Ovary (tissue), 10 donors: ENCODE measurements at regions of chr2 and their contacts with region 1.

Region 1: GRCh38 chr2:96407041-96407918 is 71.7 kb downstream of the NCAPH start:
- DNase-seq: peak; percentile 24 to 60 (median 45)
- H3K4me3 ChIP-seq: no peak overlapping the region
- H3K27ac ChIP-seq: no peak overlapping the region
- H3K4me1 ChIP-seq: peaks cover 13% of the 10 kb centered on the region
- H3K27me3 ChIP-seq: no peaks in the 10 kb centered on the region
- CTCF ChIP-seq: peak; percentile 35 to 54 (median 51)
- EP300 ChIP-seq: no peak
- POLR2A ChIP-seq: no peak

Region 2: GRCh38 chr2:96438589-96438988 is 31.3 kb after region 1 on chr2:
- intact Hi-C with region 1: no loop called
- DNase-seq: no peak
- H3K4me3 ChIP-seq: no peak overlapping the region
- H3K27ac ChIP-seq: no peak overlapping the region
- H3K4me1 ChIP-seq: no peaks in the 10 kb centered on the region
- H3K27me3 ChIP-seq: no peaks in the 10 kb centered on the region
- CTCF ChIP-seq: no peak
- EP300 ChIP-seq: no peak
- POLR2A ChIP-seq: no peak

Region 3: DNA sequence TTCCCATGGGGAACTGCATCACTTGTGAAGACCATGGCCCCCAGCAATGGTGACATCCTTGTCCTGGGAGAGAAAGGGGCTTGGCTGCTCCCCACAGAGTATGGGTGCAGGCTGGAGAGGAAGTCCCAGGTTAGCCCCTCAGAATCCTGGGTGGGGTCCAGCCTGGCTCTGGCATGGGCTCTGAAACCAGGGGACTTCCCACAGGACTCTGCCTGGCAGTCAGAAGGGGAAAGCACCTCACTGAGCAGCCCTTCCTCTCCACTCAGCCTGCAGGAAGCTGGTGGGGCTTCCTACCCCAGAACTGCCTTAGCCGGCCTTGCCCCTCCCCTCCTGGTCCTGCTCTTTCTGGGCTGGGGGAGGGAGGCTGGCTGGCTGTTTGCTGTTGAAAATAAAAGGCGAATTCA is 94.2 kb after region 1 on chr2:
- intact Hi-C with region 1: loop called in 3 of 4 experiments (anchors 5 kb)
- DNase-seq: no peak
- H3K4me3 ChIP-seq: no peak overlapping the region
- H3K27ac ChIP-seq: no peak overlapping the region
- H3K4me1 ChIP-seq: peaks cover 4% of the 10 kb centered on the region
- H3K27me3 ChIP-seq: no peaks in the 10 kb centered on the region
- CTCF ChIP-seq: no peak
- EP300 ChIP-seq: no peak
- POLR2A ChIP-seq: no peak

Region 4: GRCh38 chr2:96580771-96581170 is 173.5 kb after region 1 on chr2:
- intact Hi-C with region 1: no loop called
- DNase-seq: no peak
- H3K4me3 ChIP-seq: no peak overlapping the region
- H3K27ac ChIP-seq: no peak overlapping the region
- H3K4me1 ChIP-seq: no peaks in the 10 kb centered on the region
- H3K27me3 ChIP-seq: no peaks in the 10 kb centered on the region
- CTCF ChIP-seq: no peak
- EP300 ChIP-seq: no peak
- POLR2A ChIP-seq: no peak